ENCODE measurements at regions of chr14 and their contacts with region 1.

Region 1: DNA sequence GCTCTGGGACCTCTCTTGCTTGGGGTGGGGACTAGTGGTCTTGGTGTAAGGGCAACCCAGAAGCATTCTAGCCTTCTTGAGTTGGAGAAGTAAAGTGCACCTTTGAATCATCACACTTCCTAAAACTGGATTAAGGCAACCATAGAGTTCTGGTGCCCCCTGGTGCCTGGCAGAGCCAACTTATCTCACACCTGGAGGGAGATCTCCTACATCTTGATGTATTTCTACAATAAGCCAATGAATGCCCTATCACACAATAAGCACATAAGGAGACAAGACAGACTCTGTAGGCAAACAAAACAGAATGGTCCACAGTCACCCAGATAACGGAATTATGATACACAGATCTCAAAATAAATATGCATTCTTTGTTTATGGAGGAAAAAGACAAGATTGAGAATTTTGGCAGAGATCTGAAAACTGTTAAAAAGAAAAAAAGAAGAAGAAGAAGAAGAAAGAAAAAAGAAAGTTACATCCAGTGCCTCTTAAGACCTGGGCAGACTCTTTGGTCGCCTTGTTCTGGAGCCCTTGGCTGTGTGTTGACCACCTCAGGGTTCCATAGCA is 95.9 kb upstream of the PPP2R5C start:
- DNase-seq: peak; percentile 78
- ATAC-seq: peak; percentile 58
- H3K4me3 Mint-ChIP-seq: no peak overlapping the region
- H3K27ac Mint-ChIP-seq: no peak overlapping the region
- H3K4me1 Mint-ChIP-seq: no peaks in the 10 kb centered on the region
- H3K27me3 Mint-ChIP-seq: peaks cover 31% of the 10 kb centered on the region

Region 2: GRCh38 chr14:101426466-101426865 is 239.1 kb before region 1 on chr14:
- CTCF ChIA-PET with region 1: no interaction called
- POLR2A ChIA-PET with region 1: no interaction called
- intact Hi-C with region 1: no loop called
- DNase-seq: no peak
- ATAC-seq: no peak
- H3K4me3 Mint-ChIP-seq: no peak overlapping the region
- H3K27ac Mint-ChIP-seq: no peak overlapping the region
- H3K4me1 Mint-ChIP-seq: no peaks in the 10 kb centered on the region
- H3K27me3 Mint-ChIP-seq: peaks cover 53% of the 10 kb centered on the region

Region 3: GRCh38 chr14:101635749-101636560 is 29.6 kb before region 1 on chr14:
- CTCF ChIA-PET with region 1: no interaction called
- POLR2A ChIA-PET with region 1: interaction called, 11 read pairs
- intact Hi-C with region 1: no loop called
- DNase-seq: peak; percentile 80
- ATAC-seq: peak; percentile 99
- H3K4me3 Mint-ChIP-seq: no peak overlapping the region
- H3K27ac Mint-ChIP-seq: no peak overlapping the region
- H3K4me1 Mint-ChIP-seq: peaks cover 18% of the 10 kb centered on the region
- H3K27me3 Mint-ChIP-seq: peaks cover 29% of the 10 kb centered on the region